Activated naive CD4-positive, alpha-beta T cell treated with anti-CD3 and anti-CD28 coated beads for 36 hours (primary cell): ENCODE measurements at regions of chr19 and their contacts with region 1.

Region 1: DNA sequence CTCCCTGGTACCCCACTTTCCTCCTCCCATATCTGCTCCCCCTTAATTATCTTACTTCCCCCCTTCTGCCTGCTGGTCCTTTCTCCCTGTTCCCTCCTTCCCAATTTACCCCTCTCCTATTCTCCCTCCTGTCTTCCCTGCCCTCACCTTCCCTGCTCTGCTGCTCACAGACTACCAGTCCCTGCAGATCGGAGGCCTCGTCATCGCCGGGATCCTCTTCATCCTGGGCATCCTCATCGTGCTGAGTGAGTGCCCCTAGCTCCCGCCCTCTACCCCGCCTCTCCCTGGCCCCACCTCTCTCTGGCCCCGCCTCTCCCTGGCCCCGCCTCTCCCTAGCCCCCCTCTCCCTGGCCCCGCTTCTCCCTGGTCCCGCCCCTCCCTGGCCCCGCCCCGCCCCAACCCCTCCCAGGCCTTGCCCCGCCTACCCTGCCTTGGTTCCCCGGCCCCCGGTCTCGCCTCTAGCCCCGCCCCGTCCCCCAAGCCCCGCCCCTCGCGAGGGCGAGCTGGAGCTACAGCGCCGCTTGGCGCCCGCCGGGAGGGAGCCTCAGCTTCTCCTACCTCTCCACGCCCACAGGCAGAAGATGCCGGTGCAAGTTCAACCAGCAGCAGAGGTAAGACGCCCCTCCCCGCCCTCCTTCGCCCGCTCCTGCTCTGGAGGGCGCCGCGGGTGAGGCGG is 2.0 kb upstream of the FXYD7 start:
- DNase-seq: peak; percentile 98
- H3K4me3 Mint-ChIP-seq: peak overlapping the region; percentile 74
- H3K27ac Mint-ChIP-seq: no peak overlapping the region
- H3K4me1 Mint-ChIP-seq: peaks cover 30% of the 10 kb centered on the region
- H3K27me3 Mint-ChIP-seq: peaks cover 4% of the 10 kb centered on the region

Region 2: GRCh38 chr19:35000651-35001424 is 140.3 kb before region 1 on chr19:
- CTCF ChIA-PET with region 1: no interaction called
- intact Hi-C with region 1: no loop called
- DNase-seq: peak; percentile 71
- H3K4me3 Mint-ChIP-seq: peak overlapping the region; percentile 98
- H3K27ac Mint-ChIP-seq: peak overlapping the region; percentile 96
- H3K4me1 Mint-ChIP-seq: peaks cover 64% of the 10 kb centered on the region
- H3K27me3 Mint-ChIP-seq: no peaks in the 10 kb centered on the region

Region 3: GRCh38 chr19:35044317-35045117 is 96.6 kb before region 1 on chr19:
- CTCF ChIA-PET with region 1: interaction called, 17 read pairs
- intact Hi-C with region 1: loop called (anchors 1 kb)
- DNase-seq: peak; percentile 83
- H3K4me3 Mint-ChIP-seq: no peak overlapping the region
- H3K27ac Mint-ChIP-seq: peak overlapping the region; percentile 58
- H3K4me1 Mint-ChIP-seq: peaks cover 39% of the 10 kb centered on the region
- H3K27me3 Mint-ChIP-seq: peaks cover 8% of the 10 kb centered on the region

Region 4: DNA sequence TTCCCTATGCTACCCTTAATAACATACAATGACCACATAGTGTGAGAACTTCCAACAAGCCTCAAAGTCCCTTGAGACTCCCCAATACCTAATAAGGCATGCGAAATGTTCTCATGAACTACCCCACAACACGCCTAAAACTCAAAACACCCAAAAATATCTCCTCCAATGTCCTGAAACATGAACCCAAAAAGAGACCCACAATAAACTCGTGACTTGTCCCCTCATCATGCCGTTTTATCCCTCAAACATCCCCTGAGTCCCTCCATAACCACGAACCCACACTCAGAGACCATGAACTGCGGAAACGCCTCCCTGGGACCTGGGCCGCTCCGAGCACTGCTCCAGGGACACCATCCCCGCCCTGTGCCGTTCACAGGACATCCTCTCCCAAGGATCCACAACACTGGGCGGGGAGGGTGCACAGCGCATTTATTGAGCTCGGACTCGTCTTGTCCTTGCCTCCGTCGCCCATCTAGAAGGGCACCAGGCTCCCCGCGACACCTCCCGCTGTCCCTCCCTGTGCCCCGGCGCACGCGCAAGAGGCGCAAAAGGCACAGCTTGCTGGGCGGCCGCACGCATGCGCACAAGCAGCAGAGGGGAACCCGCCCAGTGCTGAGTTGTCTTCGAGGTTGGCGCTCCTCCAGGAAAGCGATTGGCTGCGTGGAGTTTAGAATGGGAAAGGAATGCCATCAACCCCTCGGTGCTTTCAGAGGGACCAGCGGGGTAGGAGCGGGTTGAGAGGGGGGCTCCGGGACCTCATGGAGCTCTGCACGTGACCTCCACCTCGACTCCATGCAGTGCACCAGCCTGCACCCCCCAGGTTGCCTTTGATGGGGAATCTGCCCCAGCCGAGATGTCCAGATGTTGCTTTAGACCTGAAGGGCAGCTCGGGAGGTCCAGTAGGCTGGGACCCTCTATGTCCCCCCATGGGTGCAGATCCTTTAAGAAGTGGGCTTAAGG is 16.7 kb before region 1 on chr19:
- CTCF ChIA-PET with region 1: interaction called, 7 read pairs
- intact Hi-C with region 1: loop called (anchors 1 kb)
- DNase-seq: peak; percentile 90
- H3K4me3 Mint-ChIP-seq: peak overlapping the region; percentile 89
- H3K27ac Mint-ChIP-seq: peak overlapping the region; percentile 64
- H3K4me1 Mint-ChIP-seq: peaks cover 13% of the 10 kb centered on the region
- H3K27me3 Mint-ChIP-seq: no peaks in the 10 kb centered on the region

Region 5: DNA sequence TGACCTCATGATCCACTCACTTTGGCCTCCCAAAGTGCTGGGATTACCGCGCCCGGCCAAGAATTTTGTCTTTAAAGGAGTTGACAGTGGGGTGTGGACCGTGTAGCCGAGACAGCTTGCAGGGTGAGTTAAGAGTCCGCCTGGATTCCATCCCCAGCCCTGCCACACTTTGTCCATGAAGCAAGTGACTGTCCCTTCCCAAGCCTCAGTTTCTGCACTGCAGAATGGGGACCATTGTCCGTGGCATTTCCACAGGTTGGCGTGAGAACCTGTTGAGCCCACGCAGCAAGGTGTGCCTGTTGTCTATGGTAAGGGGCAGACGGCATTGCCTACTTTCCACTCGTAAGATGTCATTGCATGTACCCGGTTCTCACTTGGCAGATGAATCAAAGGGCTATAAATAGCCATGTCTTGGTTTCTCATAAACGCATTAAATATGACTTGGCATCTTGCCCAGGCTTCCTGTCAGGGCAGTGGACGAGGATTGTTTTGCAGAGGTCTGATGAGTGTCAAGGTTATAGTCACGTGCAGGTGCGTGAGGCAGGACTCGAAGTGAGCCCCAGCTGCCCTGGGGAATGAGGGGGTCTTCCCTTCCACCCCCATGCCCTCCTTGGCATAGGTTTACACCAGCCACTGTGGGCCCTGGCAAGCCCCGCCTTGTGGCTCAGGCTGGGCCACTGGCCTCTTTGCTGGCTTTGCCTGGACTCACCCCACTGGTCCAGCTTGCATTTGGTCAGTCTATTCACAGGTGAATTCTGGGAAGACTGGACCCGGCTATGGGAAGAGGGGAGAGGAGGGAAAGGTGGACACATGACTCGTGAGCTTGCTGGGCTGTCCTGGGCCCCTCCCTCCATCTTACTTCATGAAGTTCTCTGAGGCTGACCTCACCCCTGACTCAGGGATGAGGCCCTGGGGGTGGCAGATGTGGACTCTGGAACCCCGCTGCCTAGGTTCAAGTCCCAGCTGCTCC is 72.8 kb after region 1 on chr19:
- CTCF ChIA-PET with region 1: interaction called, 15 read pairs
- intact Hi-C with region 1: loop called (anchors 1 kb)
- DNase-seq: peak; percentile 92
- H3K4me3 Mint-ChIP-seq: no peak overlapping the region
- H3K27ac Mint-ChIP-seq: peak overlapping the region; percentile 97
- H3K4me1 Mint-ChIP-seq: peaks cover 58% of the 10 kb centered on the region
- H3K27me3 Mint-ChIP-seq: no peaks in the 10 kb centered on the region